HEK293 (cell line): ENCODE measurements at regions of chr11 and their contacts with region 1.

Region 1: GRCh38 chr11:57493507-57494503 is 21.7 kb downstream of the SLC43A1 start:
- H3K4me3 ChIP-seq: no peak overlapping the region
- H3K27ac ChIP-seq: peak overlapping the region; percentile 21; the same call in 1 of the 2 replicates
- H3K4me1 ChIP-seq: no peaks in the 10 kb centered on the region
- CTCF ChIP-seq: 0 out of 2 replicates have a peak, but pooled peaks have one; percentile 18

Region 2: DNA sequence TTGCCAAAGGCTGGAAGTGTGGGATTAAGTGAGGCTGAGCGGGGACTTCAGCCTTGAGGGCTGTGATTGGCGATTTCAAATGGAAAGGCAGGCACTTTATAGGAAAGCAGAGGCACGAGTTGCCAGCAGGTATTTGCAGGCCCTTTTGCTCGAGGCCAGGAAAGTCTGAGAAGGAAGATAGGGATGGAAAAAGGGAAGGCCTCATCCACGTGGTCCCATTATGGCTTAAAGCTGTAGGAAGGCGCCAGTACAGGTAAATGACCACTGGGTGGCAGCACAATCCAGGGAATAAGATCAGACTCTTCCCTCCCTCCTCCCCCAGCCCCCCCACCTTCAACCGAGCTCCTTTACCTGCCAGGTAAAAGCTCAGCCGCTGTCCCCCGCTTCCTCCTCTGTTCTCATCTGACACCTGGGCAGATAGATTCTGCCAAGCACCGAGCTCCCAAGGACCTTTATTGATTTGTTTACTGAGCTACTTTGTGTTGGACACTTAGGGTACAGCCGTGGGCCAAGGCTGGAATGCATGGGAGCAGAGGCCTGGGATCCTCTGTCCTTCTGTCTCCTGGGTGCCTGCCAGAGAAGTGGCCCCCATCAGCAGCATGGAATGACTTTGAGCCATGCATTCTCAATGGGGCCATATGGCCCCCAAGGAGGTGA is 148.1 kb before region 1 on chr11:
- CTCF ChIA-PET with region 1: interaction called, 17 read pairs
- POLR2A ChIA-PET with region 1: interaction called, 3 read pairs
- H3K4me3 ChIP-seq: no peak overlapping the region
- H3K27ac ChIP-seq: no peak overlapping the region
- H3K4me1 ChIP-seq: no peaks in the 10 kb centered on the region
- CTCF ChIP-seq: 0 out of 2 replicates have a peak, but pooled peaks have one; percentile 26

Region 3: GRCh38 chr11:57444362-57445121 is 49.3 kb before region 1 on chr11:
- CTCF ChIA-PET with region 1: no interaction called
- POLR2A ChIA-PET with region 1: no interaction called
- H3K4me3 ChIP-seq: no peak overlapping the region
- H3K27ac ChIP-seq: no peak overlapping the region
- H3K4me1 ChIP-seq: no peaks in the 10 kb centered on the region
- CTCF ChIP-seq: no peak

Region 4: DNA sequence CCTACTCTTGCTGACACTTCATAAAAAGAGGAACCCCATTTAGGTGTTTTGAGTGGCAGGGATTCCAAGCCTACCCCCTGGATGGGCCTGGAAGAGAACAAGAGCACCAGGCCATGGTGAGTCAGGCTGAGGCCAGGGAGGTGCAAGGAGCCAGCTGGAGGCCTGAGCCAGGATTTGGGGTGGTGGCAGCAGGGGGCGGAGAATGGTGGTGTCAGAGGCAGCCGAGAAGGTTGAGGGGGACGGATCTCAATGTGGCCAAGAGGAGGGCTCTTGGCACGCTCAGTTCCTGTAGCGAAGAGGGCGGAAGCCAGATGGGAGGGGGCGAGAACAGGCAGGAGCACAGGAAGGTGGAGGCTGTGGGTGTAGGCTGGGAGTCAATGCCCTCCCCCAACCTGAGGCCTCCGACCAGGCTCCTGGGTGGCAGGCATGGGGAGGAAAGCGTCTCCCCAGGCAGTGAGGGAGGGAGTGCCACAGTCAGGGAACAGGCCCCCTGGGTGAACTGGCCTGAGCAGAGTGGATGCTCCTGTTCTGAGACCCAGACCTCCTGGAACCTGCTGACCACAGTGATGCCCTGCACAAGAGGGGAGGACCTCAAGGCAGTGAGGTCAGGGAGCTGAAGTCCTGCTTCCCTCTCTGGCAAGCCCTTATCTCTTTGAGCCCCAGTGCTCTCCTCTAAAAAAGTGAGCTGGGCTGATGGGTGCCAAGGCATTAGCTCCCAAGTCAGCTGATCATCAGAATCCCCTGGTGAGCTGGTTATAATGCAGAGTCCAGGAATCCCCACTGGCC is 19.6 kb before region 1 on chr11:
- CTCF ChIA-PET with region 1: interaction called, 10 read pairs
- POLR2A ChIA-PET with region 1: interaction called, 4 read pairs
- H3K4me3 ChIP-seq: no peak overlapping the region
- H3K27ac ChIP-seq: no peak overlapping the region
- H3K4me1 ChIP-seq: no peaks in the 10 kb centered on the region
- CTCF ChIP-seq: no peak

Region 5: DNA sequence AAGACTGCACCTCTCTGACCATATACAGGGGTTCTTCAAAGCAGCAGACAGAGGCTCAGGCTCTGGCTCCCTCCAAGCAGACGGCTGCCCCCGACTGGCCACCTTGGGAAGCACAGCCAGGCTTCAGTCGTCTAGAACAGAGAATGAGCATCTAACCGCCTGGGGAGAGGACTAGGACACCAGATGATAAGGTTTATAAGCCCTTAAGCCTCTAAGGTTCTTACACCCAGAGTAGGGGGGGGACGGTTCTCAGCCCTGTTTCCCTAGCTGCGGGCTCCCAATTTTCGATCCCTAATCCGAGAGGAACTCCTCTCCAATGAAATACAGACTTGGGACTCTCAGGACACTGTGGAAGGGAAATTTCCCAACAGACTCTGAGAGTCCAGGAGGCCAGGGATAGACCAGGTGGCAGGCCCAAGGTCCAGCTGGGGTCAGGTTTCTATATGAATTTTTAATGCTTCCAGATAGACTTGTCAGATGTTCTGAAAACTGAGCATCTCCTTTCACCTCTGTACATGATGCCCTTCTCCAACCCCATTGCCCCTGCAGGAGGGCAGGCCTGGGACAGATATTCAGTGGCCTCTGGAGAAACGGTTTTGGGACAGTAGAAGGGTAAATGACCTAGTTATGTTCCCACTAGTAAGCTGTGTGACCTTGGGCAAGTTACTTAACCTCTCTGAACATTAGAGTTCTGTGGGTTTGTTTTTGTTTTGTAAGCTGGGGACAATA is 13.2 kb before region 1 on chr11:
- CTCF ChIA-PET with region 1: interaction called, 53 read pairs
- POLR2A ChIA-PET with region 1: interaction called, 4 read pairs
- H3K4me3 ChIP-seq: no peak overlapping the region
- H3K27ac ChIP-seq: no peak overlapping the region
- H3K4me1 ChIP-seq: no peaks in the 10 kb centered on the region; the same call in 1 of the 2 replicates
- CTCF ChIP-seq: no peak

Region 6: GRCh38 chr11:57515332-57516060 is 21.7 kb after region 1 on chr11 and contains the start of gene SLC43A1:
- CTCF ChIA-PET with region 1: interaction called, 69 read pairs
- POLR2A ChIA-PET with region 1: interaction called, 15 read pairs
- H3K4me3 ChIP-seq: peak within 1 kb of the TSS; percentile 59
- H3K27ac ChIP-seq: peak within 1 kb of the TSS; percentile 11; the same call in 1 of the 2 replicates
- H3K4me1 ChIP-seq: no peaks in the 10 kb centered on the region
- CTCF ChIP-seq: no peak

Region 7: GRCh38 chr11:57644748-57645688 is 151.2 kb after region 1 on chr11:
- CTCF ChIA-PET with region 1: interaction called, 21 read pairs
- POLR2A ChIA-PET with region 1: interaction called, 3 read pairs
- H3K4me3 ChIP-seq: no peak overlapping the region
- H3K27ac ChIP-seq: no peak overlapping the region
- H3K4me1 ChIP-seq: 0 out of 2 replicates have a peak, but pooled peaks cover 6% of the 10 kb centered on the region
- CTCF ChIP-seq: peak; percentile 40; the same call in 1 of the 2 replicates